ENCODE measurements at regions of chr16 and their contacts with region 1.

Region 1: DNA sequence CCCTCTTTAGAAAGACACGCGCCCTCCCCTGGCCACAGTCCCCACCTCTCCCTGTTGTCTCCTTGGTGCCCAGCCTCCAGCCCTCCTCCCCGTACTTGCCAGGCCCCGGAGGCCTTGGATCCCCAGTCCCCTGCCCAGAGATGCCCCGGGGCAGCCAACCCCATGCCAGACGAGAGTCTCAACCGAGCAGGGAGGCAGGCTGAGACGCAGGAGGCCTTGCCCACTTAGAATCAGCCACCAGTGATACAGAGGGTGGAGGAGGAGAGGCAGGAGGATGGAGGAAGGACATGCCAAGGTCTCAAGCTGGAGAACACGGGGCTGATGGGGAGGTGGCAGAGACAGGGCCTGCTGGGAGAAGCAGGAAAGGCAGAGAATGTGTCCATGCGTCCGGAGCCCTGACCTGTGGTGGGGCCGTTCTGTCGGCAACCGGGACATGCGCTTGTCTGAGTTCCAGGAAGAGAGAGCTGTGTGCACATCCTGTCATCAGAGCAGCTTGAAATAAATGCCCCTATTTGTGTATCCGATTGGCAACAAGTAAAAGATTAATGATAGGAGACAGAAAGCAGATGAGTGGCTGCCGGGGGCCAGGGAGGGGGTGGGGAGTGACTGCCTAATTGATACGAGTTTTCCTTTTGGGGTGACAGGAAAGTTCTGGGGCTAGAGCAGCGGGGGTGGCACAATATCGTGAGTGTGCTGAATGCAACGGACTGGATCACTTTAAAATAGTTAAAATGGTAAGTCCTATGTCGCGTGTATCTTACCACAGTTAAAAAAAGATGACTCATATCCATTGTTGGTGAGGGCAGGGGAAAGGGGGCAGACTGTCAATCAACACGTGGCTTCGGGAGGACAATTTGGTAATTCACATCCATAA is 44.7 kb upstream of the MEAK7 start:
- DNase-seq: peak; percentile 12 to 74 (median 49)
- H3K4me3 ChIP-seq: peak overlapping the region; percentile 51
- H3K4me3 Mint-ChIP-seq: peak overlapping the region; percentile 85 to 94 (median 89)
- H3K27ac ChIP-seq: peak overlapping the region; percentile 75
- H3K27ac Mint-ChIP-seq: peak overlapping the region; percentile 95 to 100 (median 97)
- H3K4me1 ChIP-seq: peaks cover 68% of the 10 kb centered on the region
- H3K4me1 Mint-ChIP-seq: peaks cover 49 to 79% (median 61%) of the 10 kb centered on the region in 3 donors
- H3K27me3 ChIP-seq: no peaks in the 10 kb centered on the region
- H3K27me3 Mint-ChIP-seq: no peaks in the 10 kb centered on the region

Region 2: DNA sequence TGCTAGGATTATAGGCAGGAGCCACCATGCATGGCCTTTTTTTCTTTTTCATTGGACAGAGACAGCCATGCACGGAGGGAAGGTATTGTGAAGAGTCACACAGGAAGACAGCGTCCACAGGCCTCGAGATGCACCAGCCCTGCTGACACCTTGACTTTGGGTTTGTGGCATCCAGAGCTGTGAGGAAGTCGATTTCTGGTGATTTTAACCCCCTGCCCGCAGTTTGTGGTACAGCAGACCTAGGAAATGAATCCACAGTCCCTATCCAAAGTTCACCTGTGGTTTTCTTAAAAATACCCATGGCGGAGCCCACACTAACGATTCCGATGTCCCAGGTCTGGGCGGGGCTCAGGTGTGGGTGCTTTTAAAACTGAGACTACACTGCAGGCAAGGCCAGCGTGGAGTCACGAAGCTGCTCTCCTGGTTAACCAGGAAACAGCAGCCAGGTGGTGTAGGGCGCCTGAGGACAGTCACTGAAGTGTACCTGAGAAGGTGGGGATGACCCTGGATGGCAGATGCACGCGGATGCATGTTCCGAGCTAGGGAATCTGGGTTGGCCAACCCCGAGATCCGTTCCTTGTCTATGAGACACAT is 30.4 kb before region 1 on chr16:
- CTCF ChIA-PET with region 1: interaction called, 17 read pairs
- POLR2A ChIA-PET with region 1: interaction called, 15 read pairs
- DNase-seq: peak; percentile 45 to 86 (median 64)
- H3K4me3 ChIP-seq: peak overlapping the region; percentile 38
- H3K4me3 Mint-ChIP-seq: peak overlapping the region; percentile 7 to 80 (median 64)
- H3K27ac ChIP-seq: no peak overlapping the region
- H3K27ac Mint-ChIP-seq: peak overlapping the region; percentile 66 to 87 (median 78)
- H3K4me1 ChIP-seq: peaks cover 63% of the 10 kb centered on the region
- H3K4me1 Mint-ChIP-seq: peaks cover 55 to 69% (median 69%) of the 10 kb centered on the region in 3 donors
- H3K27me3 ChIP-seq: no peaks in the 10 kb centered on the region
- H3K27me3 Mint-ChIP-seq: no peaks in the 10 kb centered on the region

Region 3: GRCh38 chr16:84593825-84594724 is 44.9 kb after region 1 on chr16:
- CTCF ChIA-PET with region 1: interaction called, 12 read pairs
- POLR2A ChIA-PET with region 1: interaction called, 30 read pairs
- DNase-seq: peak; percentile 76 to 97 (median 83)
- H3K4me3 ChIP-seq: peak overlapping the region; percentile 53
- H3K4me3 Mint-ChIP-seq: peak overlapping the region; percentile 72 to 96 (median 88)
- H3K27ac ChIP-seq: peak overlapping the region; percentile 90
- H3K27ac Mint-ChIP-seq: peak overlapping the region; percentile 95 to 100 (median 99)
- H3K4me1 ChIP-seq: peaks cover 52% of the 10 kb centered on the region
- H3K4me1 Mint-ChIP-seq: peaks cover 64 to 85% (median 72%) of the 10 kb centered on the region in 3 donors
- H3K27me3 ChIP-seq: no peaks in the 10 kb centered on the region
- H3K27me3 Mint-ChIP-seq: peaks cover 0 to 3% of the 10 kb centered on the region in 2 donors

Region 4: GRCh38 chr16:84599521-84600202 is 50.5 kb after region 1 on chr16:
- CTCF ChIA-PET with region 1: interaction called, 12 read pairs
- POLR2A ChIA-PET with region 1: interaction called, 30 read pairs
- DNase-seq: peak in 2 of 5 donors; percentile 58 to 79
- H3K4me3 ChIP-seq: peak overlapping the region; percentile 54
- H3K4me3 Mint-ChIP-seq: peak overlapping the region; percentile 75 to 91 (median 84)
- H3K27ac ChIP-seq: peak overlapping the region; percentile 86
- H3K27ac Mint-ChIP-seq: peak overlapping the region; percentile 92 to 100 (median 95)
- H3K4me1 ChIP-seq: peaks cover 90% of the 10 kb centered on the region
- H3K4me1 Mint-ChIP-seq: peaks cover 84 to 96% (median 95%) of the 10 kb centered on the region in 3 donors
- H3K27me3 ChIP-seq: no peaks in the 10 kb centered on the region
- H3K27me3 Mint-ChIP-seq: peaks cover 0 to 2% of the 10 kb centered on the region in 2 donors

Region 5: GRCh38 chr16:84754353-84754856 is 205.2 kb after region 1 on chr16:
- CTCF ChIA-PET with region 1: no interaction called
- POLR2A ChIA-PET with region 1: no interaction called
- DNase-seq: peak; percentile 36 to 78 (median 69)
- H3K4me3 ChIP-seq: peak overlapping the region; percentile 21
- H3K4me3 Mint-ChIP-seq: peak overlapping the region in 6 of 7 donors; percentile 51 to 78 (median 64)
- H3K27ac ChIP-seq: peak overlapping the region; percentile 21
- H3K27ac Mint-ChIP-seq: peak overlapping the region; percentile 18 to 88 (median 48)
- H3K4me1 ChIP-seq: peaks cover 47% of the 10 kb centered on the region
- H3K4me1 Mint-ChIP-seq: peaks cover 69 to 92% (median 91%) of the 10 kb centered on the region in 3 donors
- H3K27me3 ChIP-seq: no peaks in the 10 kb centered on the region
- H3K27me3 Mint-ChIP-seq: no peaks in the 10 kb centered on the region

Region 6: DNA sequence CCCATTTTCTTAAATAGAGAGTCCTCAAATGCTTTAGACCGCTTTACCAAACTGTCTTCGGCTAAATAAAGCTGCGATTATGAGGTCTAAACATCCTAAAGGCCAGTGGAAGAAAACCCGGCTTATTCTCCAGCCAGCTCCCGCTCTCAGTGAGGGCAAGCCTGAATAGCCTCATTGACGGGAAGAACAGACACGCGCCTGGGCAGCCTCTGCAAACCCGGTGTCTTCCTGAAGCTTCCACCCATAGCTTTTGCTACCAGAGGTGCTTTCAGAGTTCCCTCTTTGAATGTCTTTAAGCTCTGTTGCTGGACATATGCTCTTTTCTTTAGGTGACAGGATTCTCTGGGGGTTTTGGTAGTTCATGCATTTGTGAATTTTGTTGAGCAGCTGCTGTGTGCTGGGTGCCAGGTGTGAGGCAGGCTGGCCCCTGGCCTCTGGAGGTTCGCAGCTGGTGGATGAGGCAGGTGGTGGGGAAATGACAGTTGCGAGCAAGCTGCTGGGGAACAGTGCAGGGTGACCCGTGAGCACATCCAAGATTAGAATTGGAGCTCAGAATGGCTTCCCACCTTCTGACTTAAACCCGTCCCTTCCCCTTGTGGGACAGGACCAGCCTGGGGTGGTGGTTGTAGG is 315.2 kb after region 1 on chr16:
- CTCF ChIA-PET with region 1: no interaction called
- POLR2A ChIA-PET with region 1: no interaction called
- DNase-seq: no peak
- H3K4me3 ChIP-seq: no peak overlapping the region
- H3K4me3 Mint-ChIP-seq: no peak overlapping the region
- H3K27ac ChIP-seq: no peak overlapping the region
- H3K27ac Mint-ChIP-seq: no peak overlapping the region
- H3K4me1 ChIP-seq: no peaks in the 10 kb centered on the region
- H3K4me1 Mint-ChIP-seq: no peaks in the 10 kb centered on the region
- H3K27me3 ChIP-seq: no peaks in the 10 kb centered on the region
- H3K27me3 Mint-ChIP-seq: peaks cover 31 to 33% of the 10 kb centered on the region in 2 donors